Activated T-helper 1 cell treated with anti-CD3 and anti-CD28 coated beads, Interleukin-12 subunit alpha, Interleukin-12 subunit beta, Interleukin-2, Interleukin-4 antibody, amounts not matched to agents 30 ng/mL and 10 ng/mL and 1 ng/mL, durations not matched to agents 14 hours and 24 hours and 36 hours (primary cell): ENCODE measurements at regions of chr1 and their contacts with region 1.

Region 1: GRCh38 chr1:74733604-74734484 is 892 bp downstream of the TYW3 start:
- DNase-seq: peak; percentile 31
- H3K4me3 Mint-ChIP-seq: peak overlapping the region; percentile 93
- H3K27ac Mint-ChIP-seq: peak overlapping the region; percentile 99
- H3K4me1 Mint-ChIP-seq: peaks cover 37% of the 10 kb centered on the region
- H3K27me3 Mint-ChIP-seq: no peaks in the 10 kb centered on the region

Region 2: DNA sequence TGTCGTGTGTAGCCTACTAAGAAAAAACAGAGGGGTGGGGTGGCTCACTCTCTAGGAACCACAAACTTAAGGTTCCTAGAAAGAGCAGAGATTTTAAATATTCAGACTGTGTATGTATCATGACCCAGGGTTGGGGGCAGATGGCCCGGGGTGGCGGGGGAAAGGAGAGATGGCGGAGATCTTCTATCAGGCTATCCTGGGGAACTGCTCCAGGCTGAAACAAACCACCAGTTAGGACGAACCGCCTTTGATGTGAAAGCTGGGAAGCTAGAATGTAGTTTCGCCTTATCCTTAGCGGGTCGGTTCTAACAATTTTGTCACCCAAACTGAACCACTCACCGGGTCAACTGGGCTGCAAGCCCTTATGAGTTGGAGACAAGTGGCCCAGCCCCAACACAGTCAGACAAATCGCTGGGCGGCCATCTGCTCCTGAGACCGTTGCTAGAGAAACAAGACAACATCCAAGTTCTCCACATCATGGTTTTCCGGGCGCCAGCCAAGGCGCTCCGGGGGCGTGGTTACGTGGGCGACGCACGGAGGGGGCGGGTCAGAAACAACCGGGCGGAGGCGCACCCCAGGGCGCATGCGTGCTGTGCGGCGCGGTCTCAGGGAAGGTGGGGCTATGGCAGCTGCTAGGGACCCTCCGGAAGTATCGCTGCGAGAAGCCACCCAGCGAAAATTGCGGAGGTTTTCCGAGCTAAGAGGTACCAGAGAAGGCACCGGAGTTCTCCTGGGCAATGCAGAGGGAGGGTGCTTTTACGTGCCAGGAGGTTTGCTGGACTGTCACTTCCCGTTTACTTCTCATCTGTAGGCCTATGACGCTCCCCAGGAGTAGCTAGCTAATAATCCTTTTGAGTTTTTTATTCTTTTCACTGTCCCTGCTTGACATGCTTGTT is 535.9 kb before region 1 on chr1 and contains the starts of genes FPGT and LRRIQ3:
- intact Hi-C with region 1: loop called (anchors 1 kb)
- DNase-seq: peak; percentile 93
- H3K4me3 Mint-ChIP-seq: peak within 1 kb of the TSS; percentile 92
- H3K27ac Mint-ChIP-seq: peak within 1 kb of the TSS; percentile 92
- H3K4me1 Mint-ChIP-seq: peaks cover 16% of the 10 kb centered on the region
- H3K27me3 Mint-ChIP-seq: no peaks in the 10 kb centered on the region
- total RNA-seq, gene FPGT: 6.5 and 8.3 TPM in 2 replicates
- total RNA-seq, gene LRRIQ3: 0.31 and 0.49 TPM in 2 replicates

Region 3: DNA sequence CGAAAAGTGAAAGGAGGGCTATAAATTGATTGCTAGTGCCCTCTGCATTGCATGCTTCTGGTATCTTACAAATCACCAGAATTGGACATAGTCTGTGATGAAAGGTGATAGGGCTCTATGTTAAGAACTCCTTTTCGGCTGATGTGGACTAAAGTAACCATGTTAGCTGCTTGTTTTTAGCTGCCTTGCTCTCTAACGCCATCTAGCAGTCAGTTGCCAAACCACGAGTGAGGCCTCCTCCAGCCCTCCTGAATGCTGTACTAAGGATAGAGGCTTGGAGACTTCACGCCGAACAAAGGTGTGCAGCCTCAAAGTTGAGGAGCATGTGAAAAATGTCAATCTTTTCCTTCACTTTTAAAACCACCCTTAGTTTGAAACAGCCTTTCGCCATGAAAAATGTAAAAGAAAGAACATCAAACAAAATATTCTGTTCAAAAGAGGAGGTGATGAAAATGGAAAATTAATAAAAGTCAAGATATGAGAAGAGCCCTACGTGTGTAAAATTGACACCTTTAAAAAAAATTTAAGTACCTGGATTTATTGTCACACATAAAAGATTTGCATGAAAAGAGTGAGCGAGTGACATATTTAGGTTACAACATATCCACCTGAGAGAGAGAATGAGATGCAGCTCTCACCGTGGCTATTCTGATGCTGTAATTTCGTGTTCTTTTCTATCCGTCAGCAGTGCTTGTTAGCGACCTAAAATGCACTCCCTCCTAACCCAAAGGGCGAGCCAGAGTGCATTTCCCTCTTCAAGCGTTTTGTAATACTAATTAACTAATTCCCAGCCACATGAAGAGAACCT is 229.5 kb before region 1 on chr1:
- intact Hi-C with region 1: loop called (anchors 1 kb)
- DNase-seq: peak; percentile 9
- H3K4me3 Mint-ChIP-seq: no peak overlapping the region
- H3K27ac Mint-ChIP-seq: no peak overlapping the region
- H3K4me1 Mint-ChIP-seq: no peaks in the 10 kb centered on the region
- H3K27me3 Mint-ChIP-seq: peaks cover 5% of the 10 kb centered on the region

Region 4: DNA sequence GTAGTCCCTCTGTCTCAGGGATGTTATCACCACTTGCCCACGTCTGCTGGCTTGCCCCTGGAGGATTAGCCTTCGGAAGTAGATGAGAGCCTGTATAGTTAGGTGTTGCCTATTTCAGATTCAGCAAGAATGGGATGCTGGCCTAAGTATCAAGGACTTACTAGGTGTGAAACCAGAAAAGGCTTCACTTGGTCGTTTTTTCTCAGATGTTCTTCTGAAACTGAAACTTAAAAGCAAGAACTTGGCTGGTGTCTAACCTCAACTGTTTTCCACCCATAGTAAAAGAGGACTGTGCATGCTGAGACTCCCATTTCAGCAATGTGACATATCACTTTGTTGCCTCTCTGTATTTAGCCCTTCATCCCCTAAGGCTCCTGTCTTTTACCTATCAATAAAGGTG is 154.4 kb before region 1 on chr1:
- intact Hi-C with region 1: no loop called
- DNase-seq: no peak
- H3K4me3 Mint-ChIP-seq: no peak overlapping the region
- H3K27ac Mint-ChIP-seq: no peak overlapping the region
- H3K4me1 Mint-ChIP-seq: no peaks in the 10 kb centered on the region
- H3K27me3 Mint-ChIP-seq: peaks cover 5% of the 10 kb centered on the region

Region 5: GRCh38 chr1:74689621-74690363 is 44.1 kb before region 1 on chr1:
- intact Hi-C with region 1: loop called (anchors 1 kb)
- DNase-seq: peak; percentile 5
- H3K4me3 Mint-ChIP-seq: no peak overlapping the region
- H3K27ac Mint-ChIP-seq: no peak overlapping the region
- H3K4me1 Mint-ChIP-seq: no peaks in the 10 kb centered on the region
- H3K27me3 Mint-ChIP-seq: peaks cover 7% of the 10 kb centered on the region

Region 6: DNA sequence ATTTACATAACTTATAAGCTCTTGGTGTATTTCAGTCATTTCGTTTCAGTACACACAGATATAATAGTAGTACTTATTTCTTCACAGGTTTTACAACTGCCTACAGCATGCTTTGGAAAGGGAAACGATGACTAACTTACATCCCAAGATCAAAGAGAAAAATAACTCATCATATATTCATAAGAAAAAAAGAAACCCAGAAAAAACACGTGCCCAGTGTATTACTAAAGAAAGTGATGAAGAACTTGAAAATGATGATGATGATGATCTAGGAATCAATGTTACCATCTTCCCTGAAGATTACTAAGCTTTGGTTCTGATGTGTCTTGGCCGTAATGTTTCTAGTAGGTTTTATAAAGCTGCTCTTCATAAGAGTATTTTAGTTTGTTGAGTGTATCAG is 30.0 kb after region 1 on chr1:
- intact Hi-C with region 1: loop called (anchors 2 kb)
- DNase-seq: no peak
- H3K4me3 Mint-ChIP-seq: no peak overlapping the region
- H3K27ac Mint-ChIP-seq: peak overlapping the region; percentile 20
- H3K4me1 Mint-ChIP-seq: peaks cover 10% of the 10 kb centered on the region
- H3K27me3 Mint-ChIP-seq: no peaks in the 10 kb centered on the region

Region 7: GRCh38 chr1:74835051-74835450 is 101.2 kb after region 1 on chr1:
- intact Hi-C with region 1: no loop called
- DNase-seq: no peak
- H3K4me3 Mint-ChIP-seq: no peak overlapping the region
- H3K27ac Mint-ChIP-seq: no peak overlapping the region
- H3K4me1 Mint-ChIP-seq: no peaks in the 10 kb centered on the region
- H3K27me3 Mint-ChIP-seq: no peaks in the 10 kb centered on the region

Region 8: GRCh38 chr1:75724472-75725022 is 990.7 kb after region 1 on chr1 and contains the start of gene ACADM:
- intact Hi-C with region 1: loop called (anchors 2 kb)
- DNase-seq: peak; percentile 84
- H3K4me3 Mint-ChIP-seq: peak within 1 kb of the TSS; percentile 100
- H3K27ac Mint-ChIP-seq: peak within 1 kb of the TSS; percentile 97
- H3K4me1 Mint-ChIP-seq: peaks cover 30% of the 10 kb centered on the region
- H3K27me3 Mint-ChIP-seq: no peaks in the 10 kb centered on the region
- total RNA-seq, gene ACADM: 53.2 and 54.8 TPM in 2 replicates

Region 9: GRCh38 chr1:75785983-75786853 is 1052.4 kb after region 1 on chr1 and contains the start of gene RABGGTB:
- intact Hi-C with region 1: loop called (anchors 10 kb)
- DNase-seq: peak; percentile 93
- H3K4me3 Mint-ChIP-seq: peak within 1 kb of the TSS; percentile 97
- H3K27ac Mint-ChIP-seq: peak within 1 kb of the TSS; percentile 99
- H3K4me1 Mint-ChIP-seq: peaks cover 46% of the 10 kb centered on the region
- H3K27me3 Mint-ChIP-seq: peaks cover 1% of the 10 kb centered on the region
- total RNA-seq, gene RABGGTB: 233 and 240 TPM in 2 replicates